WTC11 (cell line): ENCODE measurements at regions of chr11 and their contacts with region 1.

Region 1: DNA sequence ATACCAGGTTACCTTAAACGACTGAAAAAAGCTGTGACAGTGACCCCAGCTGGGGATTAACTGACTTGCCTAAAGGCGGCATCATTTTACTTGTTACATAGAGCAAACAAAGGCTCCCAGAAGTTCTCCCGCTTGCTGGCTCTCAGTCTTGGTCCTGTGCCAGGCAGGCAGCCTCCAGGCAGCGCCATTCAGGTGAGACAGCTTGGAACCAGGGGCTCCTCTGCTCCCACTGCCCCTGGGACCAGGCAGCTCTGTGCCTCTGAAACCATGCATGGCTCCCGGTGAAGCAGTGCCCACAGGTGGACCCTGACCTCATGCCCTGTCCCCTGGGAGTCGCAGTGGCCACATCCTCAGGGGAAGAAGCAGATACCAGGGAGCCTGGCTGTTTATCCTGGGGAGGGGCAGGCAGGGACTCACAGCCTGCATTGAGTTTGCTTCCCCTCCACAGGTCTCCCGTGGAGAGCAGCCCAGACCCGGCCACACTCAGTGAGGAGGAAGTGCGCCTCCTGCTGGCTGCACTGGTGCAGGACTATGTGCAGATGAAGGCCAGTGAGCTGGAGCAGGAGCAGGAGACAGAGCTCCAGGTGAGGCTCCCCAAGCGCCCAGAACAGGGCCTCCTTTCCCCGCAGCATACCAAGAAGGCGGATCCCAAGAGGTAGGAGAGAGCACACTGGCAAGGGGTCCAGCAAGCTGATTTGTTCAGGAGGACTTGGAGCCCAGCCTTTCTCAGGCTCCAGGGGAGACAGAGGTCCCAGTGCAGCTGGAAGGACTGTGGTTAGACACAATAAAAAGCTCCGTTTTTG is 15.6 kb upstream of the CYP2R1 start:
- DNase-seq: peak; percentile 89
- ATAC-seq: peak; percentile 58
- H3K4me3 Mint-ChIP-seq: peak overlapping the region; percentile 27; the same call in 1 of the 2 replicates
- H3K27ac Mint-ChIP-seq: no peak overlapping the region; the same call in 1 of the 2 replicates
- H3K4me1 Mint-ChIP-seq: peaks cover 18% of the 10 kb centered on the region
- H3K27me3 Mint-ChIP-seq: peaks cover 26% of the 10 kb centered on the region
- CTCF ChIP-seq: peak; percentile 92

Region 2: DNA sequence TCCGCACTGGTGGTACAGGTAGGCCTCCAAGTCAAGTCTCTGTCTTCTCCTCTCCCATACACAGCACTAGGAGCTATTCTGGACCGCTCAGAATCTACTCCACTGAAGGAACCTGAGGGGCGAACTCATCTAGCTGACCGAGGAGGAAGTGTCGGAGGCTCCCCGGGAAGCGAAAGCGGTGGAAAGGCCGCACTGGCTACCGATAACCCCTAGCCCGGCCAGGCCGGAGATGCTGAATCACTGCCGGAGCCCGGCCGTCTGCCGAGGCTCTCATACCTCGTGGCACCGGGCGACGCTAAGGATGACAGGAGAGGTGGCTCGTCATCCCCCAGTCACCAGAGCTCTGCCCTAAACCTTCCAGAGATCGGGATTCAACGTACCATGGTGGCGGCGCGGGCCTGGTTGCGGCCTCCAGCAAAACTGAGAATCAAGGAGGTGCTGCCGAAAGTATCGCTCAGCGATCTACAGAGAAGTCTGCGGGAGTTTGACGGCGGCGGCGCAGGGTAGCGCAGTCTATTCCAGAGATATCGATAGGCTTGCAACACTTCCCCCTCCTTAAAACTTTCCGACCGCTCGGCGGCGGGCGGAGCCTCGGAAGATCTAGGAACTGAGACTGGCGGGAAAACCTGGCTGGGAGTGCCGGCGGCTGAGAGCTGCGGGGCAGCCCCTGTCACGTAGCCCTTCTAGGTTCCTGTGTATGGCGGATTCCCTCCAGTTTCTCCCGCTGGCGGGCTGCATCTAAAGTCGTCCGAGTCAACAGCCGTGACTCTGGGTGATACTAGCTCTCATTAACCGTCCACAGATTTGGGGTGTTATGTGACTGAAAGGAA is 387.5 kb before region 1 on chr11 and contains the start of gene PSMA1:
- CTCF ChIA-PET with region 1: interaction called, 27 read pairs
- POLR2A ChIA-PET with region 1: interaction called, 5 read pairs
- DNase-seq: peak; percentile 97
- ATAC-seq: peak; percentile 94
- H3K4me3 Mint-ChIP-seq: peak within 1 kb of the TSS; percentile 96
- H3K27ac Mint-ChIP-seq: peak within 1 kb of the TSS; percentile 97
- H3K4me1 Mint-ChIP-seq: peaks cover 11% of the 10 kb centered on the region
- H3K27me3 Mint-ChIP-seq: no peaks in the 10 kb centered on the region
- CTCF ChIP-seq: no peak
- total RNA-seq, gene PSMA1: 139 to 143 TPM (median 140 TPM) in 3 replicates

Region 3: DNA sequence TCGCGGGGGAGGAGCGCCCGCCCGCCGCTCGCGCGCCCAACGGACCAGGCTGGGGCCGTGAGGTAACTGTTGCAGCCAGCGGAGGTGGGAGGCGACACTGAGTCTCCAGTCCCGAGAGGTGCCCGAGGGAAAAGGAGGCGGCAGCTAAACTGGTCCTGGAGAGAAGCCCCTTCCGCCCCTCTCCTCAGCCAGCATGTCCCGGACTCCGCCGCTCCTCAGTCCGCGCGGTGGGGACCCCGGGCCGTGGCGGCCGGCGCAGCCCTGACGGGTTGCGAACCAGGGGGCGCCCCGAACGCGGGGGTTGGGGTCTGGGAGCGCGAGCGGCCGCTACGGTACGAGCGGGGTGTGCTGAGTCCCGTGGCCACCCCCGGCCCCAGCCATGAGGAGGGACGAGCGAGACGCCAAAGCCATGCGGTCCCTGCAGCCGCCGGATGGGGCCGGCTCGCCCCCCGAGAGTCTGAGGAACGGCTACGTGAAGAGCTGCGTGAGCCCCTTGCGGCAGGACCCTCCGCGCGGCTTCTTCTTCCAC is 263.9 kb before region 1 on chr11 and contains the start of gene PDE3B:
- CTCF ChIA-PET with region 1: interaction called, 26 read pairs
- POLR2A ChIA-PET with region 1: interaction called, 14 read pairs
- DNase-seq: peak; percentile 85
- ATAC-seq: peak; percentile 89
- H3K4me3 Mint-ChIP-seq: peak within 1 kb of the TSS; percentile 90
- H3K27ac Mint-ChIP-seq: no peak within 1 kb of the TSS
- H3K4me1 Mint-ChIP-seq: peaks cover 29% of the 10 kb centered on the region
- H3K27me3 Mint-ChIP-seq: peaks cover 34% of the 10 kb centered on the region
- CTCF ChIP-seq: no peak
- total RNA-seq, gene PDE3B: 9.4 to 9.6 TPM (median 9.5 TPM) in 3 replicates

Region 4: DNA sequence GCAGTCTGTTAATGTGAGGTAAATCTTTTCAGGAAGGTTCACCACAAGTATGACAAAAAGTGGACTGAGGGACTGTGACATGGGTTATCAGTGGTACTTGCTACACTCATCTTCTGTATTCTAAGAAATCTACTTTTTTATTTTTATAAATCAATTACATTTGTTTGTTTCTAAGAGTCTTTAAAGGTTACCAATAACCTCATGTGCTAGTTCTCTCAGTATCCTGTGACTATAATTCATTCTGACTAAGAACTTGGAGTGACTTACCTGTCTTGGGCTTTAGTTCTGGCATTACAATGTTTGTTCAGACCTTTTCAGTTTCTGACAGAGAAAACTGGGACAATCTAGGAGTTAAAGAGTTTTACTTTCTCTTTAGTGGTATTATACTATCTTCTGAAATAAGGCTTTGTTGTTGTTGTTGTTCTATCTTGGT is 155.6 kb before region 1 on chr11:
- CTCF ChIA-PET with region 1: no interaction called
- POLR2A ChIA-PET with region 1: no interaction called
- DNase-seq: no peak
- ATAC-seq: no peak
- H3K4me3 Mint-ChIP-seq: no peak overlapping the region
- H3K27ac Mint-ChIP-seq: no peak overlapping the region
- H3K4me1 Mint-ChIP-seq: peaks cover 4% of the 10 kb centered on the region
- H3K27me3 Mint-ChIP-seq: no peaks in the 10 kb centered on the region
- CTCF ChIP-seq: no peak

Region 5: GRCh38 chr11:14835491-14836105 is 72.0 kb before region 1 on chr11:
- CTCF ChIA-PET with region 1: no interaction called
- POLR2A ChIA-PET with region 1: no interaction called
- DNase-seq: no peak
- ATAC-seq: no peak
- H3K4me3 Mint-ChIP-seq: no peak overlapping the region
- H3K27ac Mint-ChIP-seq: no peak overlapping the region
- H3K4me1 Mint-ChIP-seq: no peaks in the 10 kb centered on the region
- H3K27me3 Mint-ChIP-seq: no peaks in the 10 kb centered on the region
- CTCF ChIP-seq: no peak

Region 6: GRCh38 chr11:14892036-14892567 is 15.5 kb before region 1 on chr11 and contains the start of gene CYP2R1:
- CTCF ChIA-PET with region 1: interaction called, 141 read pairs
- POLR2A ChIA-PET with region 1: interaction called, 9 read pairs
- DNase-seq: peak; percentile 97
- ATAC-seq: peak; percentile 98
- H3K4me3 Mint-ChIP-seq: peak within 1 kb of the TSS; percentile 90
- H3K27ac Mint-ChIP-seq: peak within 1 kb of the TSS; percentile 50
- H3K4me1 Mint-ChIP-seq: peaks cover 20% of the 10 kb centered on the region
- H3K27me3 Mint-ChIP-seq: peaks cover 34% of the 10 kb centered on the region
- CTCF ChIP-seq: no peak
- total RNA-seq, gene CYP2R1: 14.9 to 23.1 TPM (median 18.3 TPM) in 3 replicates

Region 7: DNA sequence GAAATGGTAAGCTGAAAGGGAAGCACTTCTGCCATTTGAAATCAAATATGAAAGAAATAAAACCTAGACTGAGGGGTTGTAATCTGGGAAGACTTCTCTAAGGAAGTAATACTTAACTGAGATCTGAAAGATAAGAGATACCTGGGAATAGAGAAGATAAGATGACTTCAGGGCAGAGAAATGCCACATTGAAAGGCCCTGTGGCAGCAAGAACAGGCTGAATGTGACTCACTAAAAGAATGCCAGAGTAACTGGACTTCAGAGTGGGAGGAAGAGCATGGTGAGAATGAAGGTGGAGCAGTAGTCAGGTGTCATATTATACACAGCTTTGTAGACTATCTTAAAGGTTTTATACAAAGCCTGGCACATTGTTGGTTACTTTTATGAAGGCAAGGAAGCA is 47.0 kb after region 1 on chr11:
- CTCF ChIA-PET with region 1: interaction called, 20 read pairs
- POLR2A ChIA-PET with region 1: no interaction called
- DNase-seq: no peak
- ATAC-seq: no peak
- H3K4me3 Mint-ChIP-seq: no peak overlapping the region
- H3K27ac Mint-ChIP-seq: no peak overlapping the region
- H3K4me1 Mint-ChIP-seq: no peaks in the 10 kb centered on the region
- H3K27me3 Mint-ChIP-seq: no peaks in the 10 kb centered on the region
- CTCF ChIP-seq: no peak

Region 8: DNA sequence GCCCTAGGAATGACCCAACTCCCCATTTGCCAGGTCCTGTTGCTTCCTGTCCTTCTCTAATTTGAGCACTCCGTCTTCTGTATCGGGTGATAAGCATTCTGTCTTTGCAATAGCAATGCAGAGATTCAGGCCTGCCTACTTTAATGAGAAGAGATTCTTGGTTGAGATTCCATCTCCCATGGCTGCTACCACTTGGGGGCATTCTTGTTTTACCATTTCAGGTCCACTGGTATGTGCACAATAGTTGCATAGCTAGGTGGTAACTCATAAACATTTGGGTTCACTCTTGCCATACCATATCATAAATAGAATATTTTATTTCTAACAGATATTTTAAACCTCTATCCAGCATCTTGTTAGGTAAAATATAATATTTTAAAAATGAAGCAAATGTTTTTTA is 131.4 kb after region 1 on chr11:
- CTCF ChIA-PET with region 1: interaction called, 20 read pairs
- POLR2A ChIA-PET with region 1: no interaction called
- DNase-seq: no peak
- ATAC-seq: no peak
- H3K4me3 Mint-ChIP-seq: no peak overlapping the region
- H3K27ac Mint-ChIP-seq: no peak overlapping the region
- H3K4me1 Mint-ChIP-seq: peaks cover 27% of the 10 kb centered on the region
- H3K27me3 Mint-ChIP-seq: no peaks in the 10 kb centered on the region
- CTCF ChIP-seq: no peak

Region 9: GRCh38 chr11:15101072-15101709 is 193.6 kb after region 1 on chr11:
- CTCF ChIA-PET with region 1: interaction called, 22 read pairs
- POLR2A ChIA-PET with region 1: no interaction called
- DNase-seq: peak; percentile 77
- ATAC-seq: peak; percentile 96
- H3K4me3 Mint-ChIP-seq: no peak overlapping the region
- H3K27ac Mint-ChIP-seq: no peak overlapping the region
- H3K4me1 Mint-ChIP-seq: no peaks in the 10 kb centered on the region
- H3K27me3 Mint-ChIP-seq: peaks cover 3% of the 10 kb centered on the region; the same call in 1 of the 2 replicates
- CTCF ChIP-seq: peak; percentile 71; the same call in 1 of the 2 replicates

Region 10: DNA sequence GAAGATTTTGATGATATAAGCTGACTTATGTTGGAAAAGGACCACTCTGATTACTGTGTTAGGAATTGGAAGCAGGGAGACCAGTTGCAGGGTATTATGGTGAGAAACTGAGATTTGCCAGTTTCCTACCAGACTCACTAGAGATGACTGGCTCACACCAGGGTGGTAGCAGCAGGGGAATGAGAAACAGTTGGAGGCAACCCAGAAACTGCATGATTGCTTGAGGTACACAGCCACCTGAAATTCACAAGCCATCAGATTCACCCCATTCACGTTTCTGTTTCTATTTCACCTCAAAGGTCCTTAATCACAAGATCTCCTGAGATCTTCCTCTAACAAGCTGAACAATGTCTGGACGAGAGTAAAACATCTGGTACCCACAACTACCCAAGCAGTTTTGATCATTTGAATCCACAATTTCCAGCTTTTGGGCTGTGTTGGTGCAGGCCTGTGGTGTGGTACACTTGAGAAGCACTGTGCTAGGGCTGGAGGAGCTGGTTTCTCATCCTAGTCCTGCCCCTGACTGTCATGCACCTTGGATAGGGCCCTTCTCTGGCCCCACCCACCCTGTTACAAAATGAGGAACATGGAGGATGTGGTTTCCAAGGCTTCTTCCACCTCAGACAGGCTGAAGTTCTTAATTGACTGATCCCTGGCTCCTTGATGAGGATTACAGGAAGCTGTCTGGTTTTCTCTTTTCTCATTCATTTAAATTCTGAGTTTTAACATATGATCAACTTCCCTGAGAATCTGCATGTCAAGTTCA is 440.5 kb after region 1 on chr11:
- CTCF ChIA-PET with region 1: no interaction called
- POLR2A ChIA-PET with region 1: no interaction called
- DNase-seq: no peak
- ATAC-seq: no peak
- H3K4me3 Mint-ChIP-seq: no peak overlapping the region
- H3K27ac Mint-ChIP-seq: no peak overlapping the region
- H3K4me1 Mint-ChIP-seq: no peaks in the 10 kb centered on the region
- H3K27me3 Mint-ChIP-seq: no peaks in the 10 kb centered on the region
- CTCF ChIP-seq: no peak